ENCODE measurements at regions of chr3 and their contacts with region 1.

Region 1: DNA sequence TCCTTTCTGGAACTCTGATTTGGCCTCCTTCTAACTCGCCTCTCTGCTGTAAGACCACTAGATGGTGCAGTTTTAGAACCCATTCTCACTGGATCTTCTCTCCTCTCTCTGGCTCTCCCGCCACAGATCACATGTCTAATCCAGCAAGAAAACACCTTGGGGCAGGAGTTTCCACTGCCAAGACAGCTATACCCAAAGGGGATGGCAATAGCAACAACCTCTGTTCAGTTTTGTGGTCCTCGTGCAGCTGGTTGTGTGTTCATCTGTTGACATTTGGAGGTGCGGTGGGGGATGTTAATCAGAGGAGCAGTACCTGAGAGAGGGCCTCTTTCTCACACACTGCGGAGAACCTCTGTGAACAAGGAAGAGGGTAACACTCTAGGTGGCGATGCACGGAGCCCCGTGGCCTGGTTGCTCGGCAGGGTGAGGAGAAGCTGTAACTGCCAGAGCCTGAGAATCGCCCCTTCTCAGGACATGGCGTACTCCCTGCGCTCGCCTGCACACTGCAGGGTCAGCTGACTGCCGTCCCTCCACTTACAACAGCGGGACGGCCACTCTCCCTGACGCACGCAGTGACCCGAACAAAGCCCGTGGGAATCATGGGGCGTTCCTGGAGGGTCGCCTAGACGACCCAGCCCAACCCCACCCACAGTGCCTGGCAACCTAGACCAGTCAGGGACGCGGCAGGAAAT is at the start of gene TEX55:
- DNase-seq: peak; percentile 35
- H3K4me3 Mint-ChIP-seq: no peak within 1 kb of the TSS
- H3K27ac Mint-ChIP-seq: peak within 1 kb of the TSS; percentile 21
- H3K4me1 Mint-ChIP-seq: peaks cover 18% of the 10 kb centered on the region
- H3K27me3 Mint-ChIP-seq: no peaks in the 10 kb centered on the region
- CTCF ChIP-seq: no peak
- total RNA-seq, gene TEX55: not detected in 2 replicates

Region 2: DNA sequence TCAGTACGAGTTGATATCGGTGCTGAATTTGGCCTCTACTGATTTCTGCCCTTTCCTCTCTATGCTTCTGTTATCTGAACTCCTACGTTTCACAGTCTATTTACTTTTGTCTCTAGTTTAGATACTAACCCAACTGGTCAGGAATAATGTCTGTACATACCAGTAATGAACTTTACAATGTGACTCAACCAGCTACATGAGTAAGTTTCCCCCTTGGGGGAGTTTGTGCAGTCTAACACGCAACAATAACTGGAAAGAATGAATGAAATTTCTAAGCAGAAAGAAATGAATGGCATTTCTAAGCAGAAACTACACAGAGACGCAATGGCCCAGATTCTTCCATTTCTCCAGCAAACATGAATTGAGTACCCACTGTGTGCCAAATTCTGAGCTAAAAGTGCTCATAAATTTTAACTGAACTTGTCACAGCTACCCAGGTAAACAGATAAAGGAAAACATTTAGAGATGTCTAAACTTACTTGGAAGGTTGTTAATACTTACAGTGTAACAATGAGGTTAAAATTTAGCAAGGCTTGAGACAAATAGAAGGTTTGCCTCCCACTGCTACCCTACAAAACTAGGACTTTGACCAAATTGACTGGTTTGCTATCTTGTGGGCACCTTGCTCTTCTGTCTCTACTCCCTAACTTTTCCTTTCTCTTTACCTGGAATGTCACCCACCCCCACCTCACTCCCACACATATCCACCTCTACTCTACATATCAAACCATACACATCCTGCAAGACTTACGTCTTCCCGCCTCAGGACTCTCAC is 39.3 kb after region 1 on chr3:
- CTCF ChIA-PET with region 1: no interaction called
- intact Hi-C with region 1: loop called (anchors 5 kb)
- DNase-seq: peak; percentile 47
- H3K4me3 Mint-ChIP-seq: peak overlapping the region; percentile 50
- H3K27ac Mint-ChIP-seq: peak overlapping the region; percentile 90
- H3K4me1 Mint-ChIP-seq: peaks cover 71% of the 10 kb centered on the region
- H3K27me3 Mint-ChIP-seq: no peaks in the 10 kb centered on the region
- CTCF ChIP-seq: no peak

Region 3: DNA sequence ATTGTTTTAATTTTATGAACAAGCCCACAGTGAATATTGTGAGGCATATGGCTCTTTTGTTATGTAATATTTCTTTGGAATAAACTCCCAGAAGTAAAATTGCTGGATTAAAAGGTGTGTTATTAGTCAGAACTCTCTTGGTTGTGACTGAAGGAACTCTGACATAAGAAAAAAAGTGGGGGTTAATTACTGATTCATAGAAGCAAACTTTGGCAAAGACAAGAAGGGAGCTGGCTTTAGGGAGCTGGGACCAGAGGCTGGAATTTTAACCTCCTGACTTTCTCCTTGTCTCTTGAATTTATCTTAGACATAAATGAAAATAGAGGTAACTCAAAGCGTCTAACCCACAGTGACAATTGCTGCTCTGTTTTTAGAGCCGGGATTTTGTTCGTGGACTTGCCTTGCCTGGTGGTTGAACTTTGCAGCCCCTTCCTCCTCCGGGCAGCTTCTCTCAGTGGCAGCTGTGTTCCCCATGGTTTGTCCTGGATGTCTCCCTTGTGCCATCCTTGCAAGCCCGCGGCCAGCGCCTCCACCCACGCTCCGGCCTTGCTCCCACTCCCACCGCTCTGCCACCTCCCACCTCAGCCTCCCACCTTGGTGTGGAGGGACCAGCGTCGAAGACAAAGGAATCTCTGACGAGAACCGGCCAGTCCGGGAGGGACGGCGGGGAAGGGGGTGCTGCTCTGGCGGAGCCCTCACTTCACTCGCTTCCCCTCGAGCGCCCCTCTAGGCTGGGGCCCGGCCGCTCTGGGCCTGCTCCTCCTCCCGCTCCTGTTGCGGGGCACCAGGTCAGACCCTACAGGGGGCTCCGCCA is 176.6 kb after region 1 on chr3:
- CTCF ChIA-PET with region 1: no interaction called
- intact Hi-C with region 1: no loop called
- DNase-seq: no peak
- H3K4me3 Mint-ChIP-seq: peak overlapping the region; percentile 76
- H3K27ac Mint-ChIP-seq: peak overlapping the region; percentile 93
- H3K4me1 Mint-ChIP-seq: no peaks in the 10 kb centered on the region
- H3K27me3 Mint-ChIP-seq: no peaks in the 10 kb centered on the region
- CTCF ChIP-seq: no peak

Measured in Calu3 (cell line).